Naive thymus-derived CD8-positive, alpha-beta T cell (primary cell): ENCODE measurements at regions of chr2 and their contacts with region 1.

Region 1: GRCh38 chr2:37600735-37601134 is 70.7 kb downstream of the CDC42EP3 start:
- DNase-seq: no peak
- ATAC-seq: no peak
- H3K4me3 Mint-ChIP-seq: peak overlapping the region; percentile 77 to 94 (median 90)
- H3K27ac Mint-ChIP-seq: peak overlapping the region; percentile 94 to 99 (median 98)
- H3K4me1 Mint-ChIP-seq: peaks cover 29 to 51% (median 50%) of the 10 kb centered on the region in 4 donors
- H3K27me3 Mint-ChIP-seq: no peaks in the 10 kb centered on the region

Region 2: DNA sequence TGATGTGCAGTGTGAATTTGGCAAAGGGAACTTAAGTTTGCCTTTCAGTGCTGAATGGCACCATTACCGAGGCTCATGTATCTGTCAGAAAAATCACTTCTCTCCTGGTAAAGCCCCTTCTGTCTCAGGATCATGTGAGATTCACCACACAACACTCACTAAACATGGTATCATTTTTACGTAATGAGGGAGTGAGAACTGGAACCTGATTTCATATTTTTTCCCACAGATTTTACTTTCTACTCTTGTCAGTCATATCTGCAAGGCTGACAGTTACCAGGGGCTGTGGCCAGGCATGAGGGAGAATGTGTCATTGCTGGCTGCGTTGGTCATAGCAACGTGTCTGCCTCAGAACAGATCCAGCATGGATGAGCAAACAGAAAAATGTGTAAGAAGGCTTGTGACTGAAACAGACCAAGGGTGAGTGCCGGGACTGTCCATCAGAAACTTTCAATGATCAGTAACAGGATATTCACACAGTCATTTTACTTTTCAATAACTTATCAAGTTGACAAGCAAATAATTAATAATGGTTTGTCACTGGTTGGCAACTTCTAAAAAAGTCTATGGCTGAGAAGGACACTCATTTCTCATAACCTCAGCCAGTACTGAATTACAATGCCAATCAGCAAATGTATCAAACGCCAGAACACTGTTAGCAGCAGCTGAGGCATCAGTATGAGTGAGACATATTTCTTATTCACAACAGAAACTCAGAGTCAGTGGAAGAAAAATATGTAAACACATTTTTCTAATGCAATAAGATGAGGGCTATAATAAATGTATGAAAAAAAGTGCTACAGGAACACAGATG is 29.8 kb before region 1 on chr2:
- POLR2A ChIA-PET with region 1: no interaction called
- DNase-seq: no peak
- ATAC-seq: no peak
- H3K4me3 Mint-ChIP-seq: no peak overlapping the region
- H3K27ac Mint-ChIP-seq: no peak overlapping the region
- H3K4me1 Mint-ChIP-seq: peaks cover 5 to 30% (median 18%) of the 10 kb centered on the region in 4 donors
- H3K27me3 Mint-ChIP-seq: no peaks in the 10 kb centered on the region

Region 3: GRCh38 chr2:37585982-37586621 is 14.6 kb before region 1 on chr2:
- POLR2A ChIA-PET with region 1: interaction called, 24 read pairs
- DNase-seq: peak; percentile 26 to 80 (median 56)
- ATAC-seq: peak; percentile 94 to 95
- H3K4me3 Mint-ChIP-seq: peak overlapping the region in 9 of 10 donors; percentile 57 to 76 (median 68)
- H3K27ac Mint-ChIP-seq: peak overlapping the region; percentile 23 to 94 (median 82)
- H3K4me1 Mint-ChIP-seq: peaks cover 40 to 91% (median 74%) of the 10 kb centered on the region in 4 donors
- H3K27me3 Mint-ChIP-seq: no peaks in the 10 kb centered on the region

Region 4: DNA sequence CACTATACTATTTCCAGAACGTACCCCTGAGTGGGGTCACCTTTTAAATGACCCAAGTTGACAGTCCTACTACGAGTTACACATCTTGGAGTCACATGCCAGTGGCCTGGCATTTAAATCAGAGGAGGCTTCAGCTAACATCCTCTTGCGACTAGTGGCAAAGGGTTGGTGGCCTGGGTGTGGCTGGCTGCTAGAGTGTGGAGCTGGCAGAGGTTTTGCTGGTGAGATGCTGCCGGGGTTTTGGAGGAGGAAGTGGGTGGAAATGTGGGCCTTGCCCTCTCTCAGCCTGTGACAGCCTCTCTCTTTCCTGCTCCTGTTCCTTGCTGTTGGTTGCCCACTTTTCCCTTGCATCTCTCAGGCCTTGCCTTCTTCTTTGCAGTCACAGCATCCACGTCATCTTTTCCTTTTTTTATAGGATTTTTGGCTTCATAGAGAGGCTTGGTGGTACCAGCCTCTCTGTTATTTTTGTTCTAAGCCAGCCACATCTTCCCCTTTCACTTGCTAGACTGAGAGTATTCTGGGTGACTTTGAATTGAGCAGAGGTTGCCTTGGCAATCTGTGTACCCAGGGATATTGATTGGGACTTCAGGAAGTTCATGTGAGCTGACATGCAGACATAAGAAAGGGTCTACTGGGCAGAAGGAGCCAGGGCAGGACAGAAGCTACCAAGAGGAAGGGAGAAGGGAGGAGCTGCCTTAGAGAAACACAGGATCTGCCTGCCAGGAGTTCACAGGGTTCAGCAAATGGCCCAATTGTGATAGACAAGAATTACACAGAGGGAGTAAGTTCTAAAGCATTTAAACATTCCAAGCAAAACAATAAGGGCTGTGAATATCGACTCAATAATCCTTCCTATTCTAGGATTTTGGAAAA is 15.3 kb after region 1 on chr2:
- POLR2A ChIA-PET with region 1: interaction called, 78 read pairs
- DNase-seq: peak; percentile 10 to 84 (median 64)
- ATAC-seq: peak; percentile 98 to 99
- H3K4me3 Mint-ChIP-seq: peak overlapping the region in 9 of 10 donors; percentile 5 to 67 (median 51)
- H3K27ac Mint-ChIP-seq: peak overlapping the region; percentile 75 to 95 (median 92)
- H3K4me1 Mint-ChIP-seq: peaks cover 33 to 57% (median 45%) of the 10 kb centered on the region in 4 donors
- H3K27me3 Mint-ChIP-seq: no peaks in the 10 kb centered on the region

Region 5: DNA sequence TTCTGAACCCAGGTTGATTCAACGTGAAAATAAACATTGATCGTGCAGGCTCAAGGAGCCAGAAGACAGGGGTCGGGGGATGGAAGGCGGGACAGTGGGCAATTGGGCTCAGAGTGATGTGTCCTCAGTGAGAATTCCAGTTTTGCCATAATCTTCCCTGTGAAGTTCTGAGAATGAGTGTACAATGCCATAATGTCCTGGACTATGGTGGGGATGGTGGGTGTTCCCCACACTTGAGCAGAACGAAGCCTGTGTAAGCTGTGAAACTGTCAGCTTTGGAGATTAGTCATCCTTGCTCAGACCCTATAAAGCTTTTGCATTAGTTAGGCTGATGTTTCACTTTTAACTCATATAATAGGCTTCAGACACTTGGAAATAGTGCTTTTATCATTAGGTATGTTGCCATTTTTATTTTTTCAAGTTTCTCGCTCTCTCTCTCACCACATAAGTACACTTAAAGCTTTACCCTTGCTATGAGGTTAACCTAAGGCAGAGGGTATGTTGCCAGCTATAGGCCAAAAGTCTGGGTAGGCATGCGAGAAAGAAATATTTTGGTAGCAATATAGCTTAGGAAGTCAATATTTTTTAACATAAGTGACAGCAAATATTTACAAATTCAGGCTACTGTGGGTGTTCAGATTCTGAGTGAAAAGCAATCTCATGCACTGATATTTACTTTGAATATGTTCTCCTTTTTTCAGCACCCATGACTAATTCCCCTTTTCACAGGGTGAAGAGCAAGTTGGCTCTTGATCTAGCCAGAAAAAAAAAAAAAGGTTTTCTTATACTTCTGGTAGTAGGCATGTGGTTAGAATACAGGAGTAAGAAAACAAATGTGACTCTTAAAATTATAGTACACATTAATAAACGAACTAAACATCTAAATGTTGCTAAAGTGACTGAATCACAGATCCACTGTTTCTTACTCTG is 23.5 kb after region 1 on chr2:
- POLR2A ChIA-PET with region 1: interaction called, 78 read pairs
- DNase-seq: no peak
- ATAC-seq: peak in 1 of 2 donors; percentile 38
- H3K4me3 Mint-ChIP-seq: peak overlapping the region; percentile 9 to 79 (median 66)
- H3K27ac Mint-ChIP-seq: peak overlapping the region; percentile 51 to 98 (median 90)
- H3K4me1 Mint-ChIP-seq: peaks cover 40 to 65% (median 56%) of the 10 kb centered on the region in 4 donors
- H3K27me3 Mint-ChIP-seq: no peaks in the 10 kb centered on the region

Region 6: DNA sequence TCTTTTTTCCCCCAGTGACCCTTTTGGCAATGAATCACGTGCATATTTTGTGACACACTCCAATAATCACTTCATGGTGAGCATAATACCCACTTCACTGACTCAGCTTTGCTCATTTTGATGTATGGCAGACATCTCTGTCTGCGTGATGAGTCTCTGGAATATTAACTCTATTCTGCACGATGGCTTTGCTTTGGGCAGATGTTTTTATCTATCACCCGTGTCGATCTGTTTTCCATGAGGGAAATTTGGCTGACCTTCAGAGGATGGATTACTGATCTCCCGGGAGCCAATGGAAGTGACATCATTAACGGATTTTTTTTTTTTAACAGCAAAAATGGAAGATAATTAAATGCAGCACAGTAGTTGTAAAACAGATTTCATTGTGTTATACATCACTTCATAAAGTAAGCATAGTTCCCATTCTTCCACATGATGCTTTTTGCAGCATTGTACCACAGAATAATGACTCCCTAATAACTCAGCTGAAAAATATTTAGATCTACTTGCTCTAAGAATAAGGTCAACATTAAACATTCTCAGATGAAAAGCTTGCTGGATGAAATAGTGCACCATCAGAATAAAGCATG is 40.9 kb after region 1 on chr2:
- POLR2A ChIA-PET with region 1: interaction called, 10 read pairs
- DNase-seq: no peak
- ATAC-seq: no peak
- H3K4me3 Mint-ChIP-seq: no peak overlapping the region
- H3K27ac Mint-ChIP-seq: peak overlapping the region in 7 of 10 donors; percentile 32 to 95 (median 62)
- H3K4me1 Mint-ChIP-seq: peaks cover 30 to 82% (median 69%) of the 10 kb centered on the region in 4 donors
- H3K27me3 Mint-ChIP-seq: no peaks in the 10 kb centered on the region

Region 7: GRCh38 chr2:37648331-37649011 is 47.7 kb after region 1 on chr2:
- POLR2A ChIA-PET with region 1: interaction called, 21 read pairs
- DNase-seq: peak in 5 of 10 donors; percentile 32 to 50 (median 34)
- ATAC-seq: peak; percentile 70 to 79
- H3K4me3 Mint-ChIP-seq: peak overlapping the region; percentile 42 to 87 (median 72)
- H3K27ac Mint-ChIP-seq: peak overlapping the region; percentile 87 to 97 (median 94)
- H3K4me1 Mint-ChIP-seq: peaks cover 50 to 94% (median 92%) of the 10 kb centered on the region in 4 donors
- H3K27me3 Mint-ChIP-seq: no peaks in the 10 kb centered on the region

Region 8: GRCh38 chr2:37672104-37672869 is 71.6 kb after region 1 on chr2:
- POLR2A ChIA-PET with region 1: interaction called, 20 read pairs
- DNase-seq: peak; percentile 39 to 82 (median 62)
- ATAC-seq: peak; percentile 32 to 38
- H3K4me3 Mint-ChIP-seq: peak overlapping the region; percentile 82 to 96 (median 90)
- H3K27ac Mint-ChIP-seq: peak overlapping the region; percentile 64 to 93 (median 90)
- H3K4me1 Mint-ChIP-seq: peaks cover 23 to 57% (median 49%) of the 10 kb centered on the region in 4 donors
- H3K27me3 Mint-ChIP-seq: no peaks in the 10 kb centered on the region